Activated B cell treated with CpG ODN at 0.5 μM for 24 hours (primary cell): ENCODE measurements at regions of chr9 and their contacts with region 1.

Region 1: DNA sequence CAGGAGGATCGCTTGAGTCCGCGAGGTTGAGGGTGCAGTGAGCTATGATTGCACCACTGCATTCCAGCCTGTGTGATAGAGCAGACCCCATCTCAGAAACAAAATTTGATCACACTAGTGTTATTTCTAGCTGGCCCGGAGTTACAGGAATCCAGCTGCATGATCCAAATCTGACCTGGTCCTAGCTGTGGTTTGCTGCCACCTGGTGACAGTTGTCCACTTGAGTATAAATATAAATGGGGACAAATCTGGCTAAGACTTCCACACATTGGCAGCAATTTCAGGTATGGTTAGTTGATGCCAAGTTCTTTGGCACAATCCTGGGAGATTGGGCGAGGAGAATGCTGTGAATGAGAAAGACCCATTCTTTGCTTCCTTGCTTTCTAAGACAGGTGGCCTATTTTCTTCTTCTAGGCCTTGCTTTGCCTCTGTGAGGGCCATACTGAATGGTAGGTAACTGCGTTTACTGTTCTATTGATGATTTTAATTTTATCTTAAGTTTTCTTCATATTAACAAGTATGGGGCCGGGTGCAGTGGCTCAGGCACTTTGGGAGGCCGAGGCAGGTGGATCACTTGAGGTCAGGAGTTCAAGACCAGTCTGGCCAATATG is 35.4 kb downstream of the UBE2R2 start:
- DNase-seq: peak; percentile 23
- ATAC-seq: peak; percentile 70
- H3K4me3 Mint-ChIP-seq: no peak overlapping the region
- H3K27ac Mint-ChIP-seq: no peak overlapping the region
- H3K4me1 Mint-ChIP-seq: peaks cover 40% of the 10 kb centered on the region
- H3K27me3 Mint-ChIP-seq: no peaks in the 10 kb centered on the region
- CTCF ChIP-seq: no peak

Region 2: GRCh38 chr9:33737811-33738606 is 114.3 kb before region 1 on chr9:
- CTCF ChIA-PET with region 1: interaction called, 3 read pairs
- POLR2A ChIA-PET with region 1: no interaction called
- intact Hi-C with region 1: loop called (anchors 1 kb)
- DNase-seq: no peak
- ATAC-seq: no peak
- H3K4me3 Mint-ChIP-seq: no peak overlapping the region
- H3K27ac Mint-ChIP-seq: no peak overlapping the region
- H3K4me1 Mint-ChIP-seq: no peaks in the 10 kb centered on the region
- H3K27me3 Mint-ChIP-seq: peaks cover 38% of the 10 kb centered on the region
- CTCF ChIP-seq: no peak

Region 3: DNA sequence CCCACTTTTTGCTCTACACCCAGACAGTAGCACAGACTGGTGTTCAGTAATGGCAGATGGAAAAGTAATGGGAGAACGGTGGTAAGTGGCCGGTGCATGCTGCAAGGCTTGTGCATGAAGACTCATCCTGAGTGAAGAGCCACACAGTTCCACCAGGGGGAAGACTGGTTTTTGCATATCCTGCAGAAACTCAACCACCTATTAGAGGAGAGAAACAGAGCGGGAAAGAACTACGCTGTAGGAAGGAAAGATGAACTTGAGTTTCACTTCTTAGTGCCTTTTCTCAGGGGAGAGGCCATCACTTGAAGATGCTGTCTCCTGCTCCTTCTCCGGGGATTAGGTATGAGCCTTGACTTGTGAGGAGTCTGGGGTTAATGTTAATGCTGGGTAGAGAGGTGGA is 66.4 kb before region 1 on chr9:
- CTCF ChIA-PET with region 1: no interaction called
- POLR2A ChIA-PET with region 1: no interaction called
- intact Hi-C with region 1: loop called (anchors 1 kb)
- DNase-seq: no peak
- ATAC-seq: no peak
- H3K4me3 Mint-ChIP-seq: no peak overlapping the region
- H3K27ac Mint-ChIP-seq: no peak overlapping the region
- H3K4me1 Mint-ChIP-seq: no peaks in the 10 kb centered on the region
- H3K27me3 Mint-ChIP-seq: peaks cover 4% of the 10 kb centered on the region
- CTCF ChIP-seq: no peak

Region 4: DNA sequence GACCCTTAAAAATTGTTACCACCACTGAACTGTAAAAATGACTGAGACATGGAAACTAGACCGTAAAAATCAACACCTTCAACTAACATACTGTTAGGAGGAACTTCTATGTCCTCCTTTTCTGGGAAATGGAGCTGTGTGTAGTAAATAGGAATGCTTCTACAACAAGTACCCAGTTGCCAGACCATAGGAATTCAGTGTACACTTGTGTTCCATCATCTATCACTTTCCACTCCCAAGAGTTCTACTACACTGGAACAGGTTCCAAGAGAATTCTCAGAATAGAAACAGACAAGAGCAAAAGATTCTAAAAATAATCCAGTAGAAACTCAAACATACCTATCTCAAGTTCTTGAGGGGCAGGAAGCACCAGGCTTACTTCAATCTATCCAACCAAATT is 172.7 kb after region 1 on chr9:
- CTCF ChIA-PET with region 1: no interaction called
- POLR2A ChIA-PET with region 1: no interaction called
- intact Hi-C with region 1: no loop called
- DNase-seq: no peak
- ATAC-seq: no peak
- H3K4me3 Mint-ChIP-seq: no peak overlapping the region
- H3K27ac Mint-ChIP-seq: no peak overlapping the region
- H3K4me1 Mint-ChIP-seq: no peaks in the 10 kb centered on the region
- H3K27me3 Mint-ChIP-seq: no peaks in the 10 kb centered on the region
- CTCF ChIP-seq: no peak